Calu3 (cell line): ENCODE measurements at regions of chr2 and their contacts with region 1.

Region 1: GRCh38 chr2:196511258-196512168 is 128.0 kb upstream of the CCDC150 start:
- DNase-seq: no peak
- H3K4me3 Mint-ChIP-seq: no peak overlapping the region
- H3K27ac Mint-ChIP-seq: peak overlapping the region; percentile 55
- H3K4me1 Mint-ChIP-seq: peaks cover 38% of the 10 kb centered on the region
- H3K27me3 Mint-ChIP-seq: no peaks in the 10 kb centered on the region
- CTCF ChIP-seq: no peak

Region 2: GRCh38 chr2:195923889-195924288 is 587.6 kb before region 1 on chr2:
- CTCF ChIA-PET with region 1: no interaction called
- intact Hi-C with region 1: no loop called
- DNase-seq: no peak
- H3K4me3 Mint-ChIP-seq: no peak overlapping the region
- H3K27ac Mint-ChIP-seq: no peak overlapping the region
- H3K4me1 Mint-ChIP-seq: no peaks in the 10 kb centered on the region
- H3K27me3 Mint-ChIP-seq: no peaks in the 10 kb centered on the region
- CTCF ChIP-seq: no peak

Region 3: DNA sequence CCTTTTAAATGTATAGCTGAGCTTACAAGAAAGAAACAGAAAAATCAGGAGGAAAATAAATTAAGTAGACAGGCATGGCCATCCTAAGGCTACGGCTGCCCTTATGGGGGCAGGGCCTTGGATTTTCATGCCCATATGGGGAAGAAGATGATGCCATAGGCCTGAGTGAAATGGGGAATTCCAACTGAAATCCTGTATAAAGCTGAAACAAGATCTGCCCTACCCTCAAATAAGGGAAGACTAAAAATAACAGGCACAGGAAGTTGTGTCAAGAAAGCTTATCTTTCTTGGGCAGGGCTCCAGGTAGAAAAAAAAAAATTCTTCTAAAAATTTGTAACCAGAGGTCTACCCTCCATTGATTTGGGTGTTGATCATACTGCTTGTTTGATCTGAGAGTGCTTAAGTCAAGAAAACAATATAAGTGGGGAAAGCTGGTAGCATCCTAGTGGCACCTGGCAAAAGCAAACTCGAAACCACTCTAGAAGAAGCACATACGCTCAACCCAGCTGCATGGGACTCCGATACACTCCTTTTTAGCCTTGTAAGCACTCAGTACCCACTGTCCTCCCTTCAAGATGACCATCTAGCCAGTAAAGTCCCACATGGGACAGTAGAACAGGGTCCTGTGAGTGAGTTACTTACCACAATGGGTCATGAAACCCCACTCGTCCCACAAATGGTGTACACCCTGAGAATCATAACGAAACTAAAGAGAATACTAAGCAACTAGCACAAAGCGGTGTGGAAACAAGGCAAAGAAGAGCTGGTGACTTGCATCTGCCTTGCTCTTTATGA is 465.2 kb before region 1 on chr2:
- CTCF ChIA-PET with region 1: no interaction called
- intact Hi-C with region 1: no loop called
- DNase-seq: no peak
- H3K4me3 Mint-ChIP-seq: no peak overlapping the region
- H3K27ac Mint-ChIP-seq: no peak overlapping the region
- H3K4me1 Mint-ChIP-seq: no peaks in the 10 kb centered on the region
- H3K27me3 Mint-ChIP-seq: no peaks in the 10 kb centered on the region
- CTCF ChIP-seq: no peak

Region 4: GRCh38 chr2:196468394-196468793 is 43.1 kb before region 1 on chr2:
- CTCF ChIA-PET with region 1: no interaction called
- intact Hi-C with region 1: loop called (anchors 5 kb)
- DNase-seq: no peak
- H3K4me3 Mint-ChIP-seq: no peak overlapping the region
- H3K27ac Mint-ChIP-seq: no peak overlapping the region
- H3K4me1 Mint-ChIP-seq: no peaks in the 10 kb centered on the region
- H3K27me3 Mint-ChIP-seq: no peaks in the 10 kb centered on the region
- CTCF ChIP-seq: no peak

Region 5: GRCh38 chr2:196635156-196635555 is 123.6 kb after region 1 on chr2:
- CTCF ChIA-PET with region 1: no interaction called
- intact Hi-C with region 1: no loop called
- DNase-seq: no peak
- H3K4me3 Mint-ChIP-seq: no peak overlapping the region
- H3K27ac Mint-ChIP-seq: no peak overlapping the region
- H3K4me1 Mint-ChIP-seq: peaks cover 2% of the 10 kb centered on the region
- H3K27me3 Mint-ChIP-seq: no peaks in the 10 kb centered on the region
- CTCF ChIP-seq: no peak

Region 6: DNA sequence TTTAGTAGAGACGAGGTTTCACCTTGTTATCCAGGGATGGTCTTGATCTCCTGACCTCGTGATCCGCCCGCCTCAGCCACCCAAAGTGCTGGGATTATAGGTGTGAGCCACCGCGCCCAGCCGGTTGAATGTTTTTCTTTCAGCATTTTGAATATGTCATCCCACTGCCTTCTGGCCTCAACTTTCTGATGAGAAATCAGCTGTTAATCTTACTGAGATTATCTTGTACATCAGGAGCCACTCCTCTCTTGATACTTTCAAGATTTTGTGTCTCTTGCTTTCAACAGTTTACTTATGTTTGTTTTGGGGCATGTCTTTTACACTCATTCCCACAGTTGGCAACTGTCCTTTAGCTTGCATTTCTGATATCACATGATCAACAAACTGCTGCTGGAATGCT is 174.3 kb after region 1 on chr2:
- CTCF ChIA-PET with region 1: no interaction called
- intact Hi-C with region 1: no loop called
- DNase-seq: no peak
- H3K4me3 Mint-ChIP-seq: no peak overlapping the region
- H3K27ac Mint-ChIP-seq: no peak overlapping the region
- H3K4me1 Mint-ChIP-seq: no peaks in the 10 kb centered on the region
- H3K27me3 Mint-ChIP-seq: no peaks in the 10 kb centered on the region
- CTCF ChIP-seq: no peak